ENCODE measurements at regions of chr4 and their contacts with region 1.

Region 1: GRCh38 chr4:140037357-140038030 is 116.5 kb downstream of the MAML3 start:
- DNase-seq: peak; percentile 92
- ATAC-seq: peak; percentile 98
- H3K4me3 ChIP-seq: peak overlapping the region; percentile 43; the same call in 1 of the 2 replicates
- H3K27ac ChIP-seq: peak overlapping the region; percentile 95
- H3K4me1 ChIP-seq: peaks cover 25% of the 10 kb centered on the region
- H3K27me3 ChIP-seq: no peaks in the 10 kb centered on the region
- CTCF ChIP-seq: no peak

Region 2: GRCh38 chr4:139825523-139826014 is 211.9 kb before region 1 on chr4:
- CTCF ChIA-PET with region 1: no interaction called
- POLR2A ChIA-PET with region 1: no interaction called
- intact Hi-C with region 1: no loop called
- DNase-seq: no peak
- ATAC-seq: no peak
- H3K4me3 ChIP-seq: no peak overlapping the region
- H3K27ac ChIP-seq: no peak overlapping the region
- H3K4me1 ChIP-seq: no peaks in the 10 kb centered on the region
- H3K27me3 ChIP-seq: no peaks in the 10 kb centered on the region
- CTCF ChIP-seq: no peak

Region 3: DNA sequence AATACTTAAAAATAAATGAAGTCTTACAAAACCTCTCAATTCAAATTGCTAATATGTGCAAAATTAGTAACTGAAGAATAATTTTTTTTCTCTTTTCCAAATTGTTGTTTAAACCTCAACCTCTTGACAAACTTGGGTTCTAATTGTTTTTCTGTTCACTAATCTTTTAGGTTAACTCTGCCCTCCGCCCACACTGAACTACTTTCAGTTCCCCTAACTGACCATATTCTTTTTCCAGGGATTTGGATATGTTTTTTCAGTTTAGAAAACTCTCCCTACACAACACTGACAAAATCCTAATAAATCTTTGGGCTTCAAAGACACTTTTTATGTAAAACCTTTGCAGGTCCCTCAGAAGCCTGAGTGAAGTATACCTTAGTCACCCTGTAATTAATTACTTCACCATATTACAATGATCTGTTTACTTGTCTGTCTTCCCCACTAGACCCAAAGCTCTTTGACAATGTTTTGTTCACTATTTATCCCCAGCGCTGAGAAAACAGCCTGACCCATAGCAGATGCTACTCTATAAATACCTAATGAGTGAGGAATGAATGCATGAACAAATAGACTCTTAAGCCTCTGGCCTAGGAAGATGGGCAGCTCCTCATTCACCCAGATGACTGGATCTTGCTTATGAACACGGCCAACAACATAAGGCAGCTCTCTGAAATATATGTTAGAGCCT is 18.4 kb before region 1 on chr4:
- CTCF ChIA-PET with region 1: no interaction called
- POLR2A ChIA-PET with region 1: no interaction called
- intact Hi-C with region 1: loop called (anchors 1 kb)
- DNase-seq: peak; percentile 87
- ATAC-seq: peak; percentile 90
- H3K4me3 ChIP-seq: peak overlapping the region; percentile 36; the same call in 1 of the 2 replicates
- H3K27ac ChIP-seq: peak overlapping the region; percentile 94
- H3K4me1 ChIP-seq: peaks cover 37% of the 10 kb centered on the region
- H3K27me3 ChIP-seq: no peaks in the 10 kb centered on the region
- CTCF ChIP-seq: no peak

Region 4: DNA sequence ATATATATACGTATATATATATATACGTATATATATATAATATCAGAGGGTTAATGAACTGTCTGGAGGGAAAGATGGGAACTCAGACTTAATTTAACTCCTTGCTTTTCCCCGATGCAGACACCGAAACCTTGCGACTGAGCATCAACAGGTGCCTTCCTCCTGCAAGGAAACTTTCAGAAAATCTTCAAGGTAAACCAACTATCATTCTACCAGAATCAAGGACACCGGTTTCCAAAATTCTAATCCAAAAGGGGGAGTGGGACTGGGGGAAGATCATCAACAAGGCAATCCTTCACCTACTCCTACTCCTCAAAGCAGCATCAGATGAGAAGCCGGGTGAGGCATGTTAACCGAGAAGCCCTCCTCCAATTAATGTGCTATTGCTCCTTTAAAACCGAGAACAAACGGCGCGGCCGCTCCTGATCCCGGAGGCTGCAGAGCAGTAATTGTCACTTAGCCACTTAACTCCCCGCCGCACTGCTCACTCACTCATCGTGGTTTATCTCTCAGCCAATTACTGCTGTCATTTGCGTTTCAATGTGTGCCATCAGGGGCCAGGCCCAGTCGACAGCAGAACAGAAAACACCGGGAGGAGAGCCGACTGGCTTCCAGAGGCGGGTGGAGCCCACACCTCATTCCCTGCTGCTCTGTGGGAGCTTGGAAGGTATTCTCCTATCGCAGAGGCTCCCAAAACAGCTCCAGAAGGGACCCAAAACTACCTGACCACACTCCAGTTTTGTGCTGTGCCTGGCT is 54.8 kb after region 1 on chr4:
- CTCF ChIA-PET with region 1: no interaction called
- POLR2A ChIA-PET with region 1: interaction called, 10 read pairs
- intact Hi-C with region 1: no loop called
- DNase-seq: peak; percentile 30
- ATAC-seq: peak; percentile 22
- H3K4me3 ChIP-seq: peak overlapping the region; percentile 60
- H3K27ac ChIP-seq: peak overlapping the region; percentile 98
- H3K4me1 ChIP-seq: peaks cover 71% of the 10 kb centered on the region
- H3K27me3 ChIP-seq: no peaks in the 10 kb centered on the region
- CTCF ChIP-seq: no peak

Region 5: GRCh38 chr4:141912831-141913230 is 1875.3 kb after region 1 on chr4:
- CTCF ChIA-PET with region 1: no interaction called
- POLR2A ChIA-PET with region 1: no interaction called
- intact Hi-C with region 1: no loop called
- DNase-seq: no peak
- ATAC-seq: no peak
- H3K4me3 ChIP-seq: no peak overlapping the region
- H3K27ac ChIP-seq: no peak overlapping the region
- H3K4me1 ChIP-seq: no peaks in the 10 kb centered on the region
- H3K27me3 ChIP-seq: no peaks in the 10 kb centered on the region
- CTCF ChIP-seq: no peak